Aorta (tissue), 5 donors: ENCODE measurements at regions of chr20 and their contacts with region 1.

Region 1: GRCh38 chr20:22106308-22106938 is 401.0 kb downstream of the PAX1 start:
- DNase-seq: no peak
- ATAC-seq: no peak
- H3K4me3 ChIP-seq: no peak overlapping the region
- H3K27ac ChIP-seq: no peak overlapping the region
- H3K4me1 ChIP-seq: no peaks in the 10 kb centered on the region
- H3K27me3 ChIP-seq: no peaks in the 10 kb centered on the region

Region 2: DNA sequence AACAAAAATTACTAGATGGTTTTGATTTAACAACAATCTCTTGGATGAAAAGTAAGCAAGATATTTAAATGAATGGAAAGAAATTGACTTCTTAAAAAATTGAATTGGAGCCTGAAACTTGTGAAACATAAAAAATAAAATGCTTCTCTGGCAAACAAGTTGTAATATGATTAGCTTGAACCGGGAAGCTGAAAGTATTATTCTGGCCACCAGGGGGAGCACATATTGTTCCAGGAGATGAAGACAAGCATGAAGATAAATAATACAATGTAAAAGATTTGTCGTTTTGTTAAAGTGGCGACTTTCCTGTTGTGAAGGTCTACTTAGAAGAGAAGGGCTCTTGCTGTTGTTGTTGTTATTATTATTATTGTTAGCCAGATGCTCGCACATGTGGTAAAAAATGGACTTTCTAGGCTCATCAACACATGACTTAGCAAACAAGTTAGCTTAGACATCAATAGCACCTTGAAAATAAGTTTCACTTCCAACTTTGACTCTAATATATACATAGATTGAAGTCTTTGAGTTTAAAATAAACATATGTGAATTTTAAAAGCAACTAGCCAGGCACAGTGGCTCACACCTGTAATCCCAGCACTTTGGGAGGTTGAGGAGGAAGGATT is 386.7 kb before region 1 on chr20:
- intact Hi-C with region 1: loop called in 1 of 2 experiments (anchors 5 kb)
- DNase-seq: no peak
- ATAC-seq: no peak
- H3K4me3 ChIP-seq: no peak overlapping the region
- H3K27ac ChIP-seq: no peak overlapping the region
- H3K4me1 ChIP-seq: no peaks in the 10 kb centered on the region
- H3K27me3 ChIP-seq: peaks cover 0 to 2% of the 10 kb centered on the region in 2 donors

Region 3: GRCh38 chr20:21808863-21809664 is 297.4 kb before region 1 on chr20:
- intact Hi-C with region 1: loop called in 1 of 2 experiments (anchors 2 kb)
- DNase-seq: peak; percentile 58 to 83
- ATAC-seq: no peak
- H3K4me3 ChIP-seq: no peak overlapping the region
- H3K27ac ChIP-seq: no peak overlapping the region
- H3K4me1 ChIP-seq: no peaks in the 10 kb centered on the region
- H3K27me3 ChIP-seq: no peaks in the 10 kb centered on the region

Region 4: DNA sequence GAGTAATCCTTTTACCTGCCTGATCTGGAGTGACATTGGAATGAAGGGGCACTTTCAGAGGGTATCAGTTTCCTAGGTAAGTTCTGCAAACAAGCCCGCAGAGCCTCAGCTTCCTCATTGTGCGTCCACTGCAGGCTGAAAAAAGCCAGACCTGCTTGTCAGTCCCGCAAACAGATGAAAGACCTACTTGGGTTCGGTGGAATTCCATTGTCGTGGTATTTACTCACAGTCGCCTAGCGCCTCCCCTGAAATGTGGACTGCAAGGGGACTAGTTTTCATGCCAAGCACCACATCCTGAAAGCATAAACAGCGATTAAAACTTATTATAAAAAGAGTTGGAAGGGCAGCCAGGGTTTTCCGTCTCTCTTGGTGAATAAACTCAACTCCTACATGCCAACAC is 279.4 kb before region 1 on chr20:
- intact Hi-C with region 1: loop called in 1 of 2 experiments (anchors 10 kb)
- DNase-seq: no peak
- ATAC-seq: no peak
- H3K4me3 ChIP-seq: no peak overlapping the region
- H3K27ac ChIP-seq: no peak overlapping the region
- H3K4me1 ChIP-seq: no peaks in the 10 kb centered on the region
- H3K27me3 ChIP-seq: no peaks in the 10 kb centered on the region